Motor neuron (in vitro differentiated cells): ENCODE measurements at regions of chr3 and their contacts with region 1.

Region 1: DNA sequence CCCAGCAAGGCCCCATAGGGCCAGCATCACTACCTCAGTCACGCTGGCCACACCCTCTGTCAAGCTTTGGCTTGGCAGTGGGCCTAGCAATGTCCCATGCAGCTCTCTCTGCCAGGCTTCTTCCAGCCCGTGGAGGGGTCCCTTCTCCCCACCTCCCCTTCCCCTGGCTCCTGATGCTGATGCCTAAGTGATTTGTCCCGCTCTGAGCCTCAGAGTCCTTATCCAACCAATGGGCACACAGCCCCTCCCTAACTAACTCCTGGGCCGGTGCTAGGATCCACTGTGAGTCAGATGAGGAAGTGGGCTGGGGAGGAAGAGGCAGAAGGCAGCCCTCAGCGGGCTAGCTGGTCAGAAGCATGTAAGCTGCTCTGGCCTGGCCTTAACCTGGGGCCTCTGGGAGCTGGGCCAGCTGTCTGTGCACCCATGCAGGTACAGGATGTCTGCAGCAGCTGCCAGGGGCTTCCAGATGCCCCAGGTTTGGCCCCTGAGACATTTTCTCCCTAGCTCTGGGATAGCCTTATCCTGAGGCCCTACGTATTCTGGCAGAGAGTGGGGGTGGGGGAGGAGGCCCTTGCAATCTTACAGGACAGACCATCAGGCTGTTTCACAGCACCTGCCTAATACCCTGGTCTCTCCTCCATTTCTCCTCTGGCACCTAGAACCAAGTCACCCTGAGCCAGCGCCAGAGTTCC is 740 bp upstream of the ZBTB47 start:
- ATAC-seq: peak in 4 of 8 experiments; percentile 6 to 32 (median 14)
- H3K4me3 ChIP-seq: peak overlapping the region in 2 of 5 donors; percentile 55 to 90
- H3K27ac ChIP-seq: peak overlapping the region in 1 of 2 donors; percentile 17
- H3K4me1 ChIP-seq: peaks cover 18% of the 10 kb centered on the region in 2 donors

Region 2: GRCh38 chr3:42749753-42750231 is 97.0 kb after region 1 on chr3:
- in situ Hi-C with region 1: loop called in 1 of 9 experiments (anchors 10 kb)
- ATAC-seq: peak in 6 of 8 experiments; percentile 21 to 68 (median 34)
- H3K4me3 ChIP-seq: no peak overlapping the region
- H3K27ac ChIP-seq: no peak overlapping the region
- H3K4me1 ChIP-seq: no peaks in the 10 kb centered on the region

Region 3: DNA sequence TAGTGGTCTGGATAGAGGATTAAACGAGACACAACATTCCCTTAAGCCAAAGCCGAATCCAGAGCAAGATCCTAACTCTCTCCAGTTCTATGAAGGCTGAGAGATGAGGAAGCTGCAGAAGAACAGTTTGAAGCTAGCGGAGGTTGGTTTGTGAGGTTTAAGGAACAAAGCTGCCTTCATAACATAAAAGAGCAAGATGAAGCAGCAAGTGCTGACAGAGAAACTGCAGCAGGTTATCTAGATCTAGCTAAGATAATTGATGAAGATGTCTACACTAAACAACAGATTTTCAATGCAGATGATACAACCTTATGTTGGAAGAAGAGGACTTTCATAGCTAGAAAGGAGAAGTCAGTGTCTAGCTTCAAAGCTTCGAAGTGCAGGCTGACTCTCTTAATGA is 311.5 kb after region 1 on chr3:
- in situ Hi-C with region 1: no loop called
- ATAC-seq: no peak
- H3K4me3 ChIP-seq: no peak overlapping the region
- H3K27ac ChIP-seq: no peak overlapping the region
- H3K4me1 ChIP-seq: no peaks in the 10 kb centered on the region

Region 4: GRCh38 chr3:43496740-43497375 is 844.1 kb after region 1 on chr3:
- in situ Hi-C with region 1: no loop called
- ATAC-seq: no peak
- H3K4me3 ChIP-seq: no peak overlapping the region
- H3K27ac ChIP-seq: no peak overlapping the region
- H3K4me1 ChIP-seq: peaks cover 3 to 5% of the 10 kb centered on the region in 2 donors